AG04450 (cell line): ENCODE measurements at regions of chr1 and their contacts with region 1.

Region 1: GRCh38 chr1:186404454-186405051 is 28.9 kb downstream of the ODR4 start:
- DNase-seq: peak; percentile 11
- H3K4me3 ChIP-seq: no peak overlapping the region
- H3K27ac ChIP-seq: no peak overlapping the region
- H3K27me3 ChIP-seq: no peaks in the 10 kb centered on the region
- CTCF ChIP-seq: peak; percentile 79

Region 2: GRCh38 chr1:186255266-186255665 is 149.3 kb before region 1 on chr1:
- CTCF ChIA-PET with region 1: no interaction called
- POLR2A ChIA-PET with region 1: no interaction called
- DNase-seq: no peak
- H3K4me3 ChIP-seq: no peak overlapping the region
- H3K27ac ChIP-seq: no peak overlapping the region
- H3K27me3 ChIP-seq: no peaks in the 10 kb centered on the region
- CTCF ChIP-seq: no peak

Region 3: DNA sequence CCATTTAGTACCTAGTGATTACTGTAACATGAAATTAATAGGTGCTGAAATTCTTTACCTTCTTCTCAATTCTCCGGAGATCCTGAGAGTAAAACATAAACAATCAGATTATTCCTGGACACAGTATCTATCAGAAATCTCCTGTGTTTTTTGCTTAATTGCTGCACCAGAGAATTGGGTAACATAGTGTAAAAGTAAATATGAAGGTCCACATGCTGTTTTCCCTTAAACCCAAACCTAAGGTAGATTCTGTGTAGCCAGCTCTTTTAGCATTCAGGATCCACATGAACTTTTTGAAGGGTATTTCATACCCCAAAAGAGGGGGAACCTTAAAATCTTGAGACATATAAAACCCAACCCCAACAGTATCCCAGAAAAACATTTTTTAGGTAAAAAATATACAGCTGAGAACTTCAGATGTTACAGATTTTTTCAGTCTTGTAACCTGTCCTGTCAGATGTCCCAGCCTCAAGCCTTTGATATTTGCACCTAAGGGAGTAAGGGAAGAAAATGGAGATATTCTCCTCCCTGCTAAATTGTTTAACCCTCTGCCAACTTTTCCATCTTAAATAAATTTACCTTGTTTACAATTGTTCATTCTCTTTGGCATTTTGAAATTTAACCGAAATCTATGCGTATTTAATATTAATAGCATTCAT is 17.7 kb before region 1 on chr1:
- CTCF ChIA-PET with region 1: interaction called, 11 read pairs
- POLR2A ChIA-PET with region 1: no interaction called
- DNase-seq: no peak
- H3K4me3 ChIP-seq: no peak overlapping the region
- H3K27ac ChIP-seq: no peak overlapping the region
- H3K27me3 ChIP-seq: no peaks in the 10 kb centered on the region
- CTCF ChIP-seq: no peak

Region 4: GRCh38 chr1:186420923-186421322 is 16.4 kb after region 1 on chr1:
- CTCF ChIA-PET with region 1: interaction called, 16 read pairs
- POLR2A ChIA-PET with region 1: no interaction called
- DNase-seq: no peak
- H3K4me3 ChIP-seq: no peak overlapping the region
- H3K27ac ChIP-seq: no peak overlapping the region
- H3K27me3 ChIP-seq: no peaks in the 10 kb centered on the region
- CTCF ChIP-seq: no peak